Activated CD4-positive, alpha-beta memory T cell treated with anti-CD3 and anti-CD28 coated beads, Interleukin-2, amount 10 ng/mL, durations not matched to agents 7 days and 5 days (primary cell): ENCODE measurements at regions of chr6 and their contacts with region 1.

Region 1: DNA sequence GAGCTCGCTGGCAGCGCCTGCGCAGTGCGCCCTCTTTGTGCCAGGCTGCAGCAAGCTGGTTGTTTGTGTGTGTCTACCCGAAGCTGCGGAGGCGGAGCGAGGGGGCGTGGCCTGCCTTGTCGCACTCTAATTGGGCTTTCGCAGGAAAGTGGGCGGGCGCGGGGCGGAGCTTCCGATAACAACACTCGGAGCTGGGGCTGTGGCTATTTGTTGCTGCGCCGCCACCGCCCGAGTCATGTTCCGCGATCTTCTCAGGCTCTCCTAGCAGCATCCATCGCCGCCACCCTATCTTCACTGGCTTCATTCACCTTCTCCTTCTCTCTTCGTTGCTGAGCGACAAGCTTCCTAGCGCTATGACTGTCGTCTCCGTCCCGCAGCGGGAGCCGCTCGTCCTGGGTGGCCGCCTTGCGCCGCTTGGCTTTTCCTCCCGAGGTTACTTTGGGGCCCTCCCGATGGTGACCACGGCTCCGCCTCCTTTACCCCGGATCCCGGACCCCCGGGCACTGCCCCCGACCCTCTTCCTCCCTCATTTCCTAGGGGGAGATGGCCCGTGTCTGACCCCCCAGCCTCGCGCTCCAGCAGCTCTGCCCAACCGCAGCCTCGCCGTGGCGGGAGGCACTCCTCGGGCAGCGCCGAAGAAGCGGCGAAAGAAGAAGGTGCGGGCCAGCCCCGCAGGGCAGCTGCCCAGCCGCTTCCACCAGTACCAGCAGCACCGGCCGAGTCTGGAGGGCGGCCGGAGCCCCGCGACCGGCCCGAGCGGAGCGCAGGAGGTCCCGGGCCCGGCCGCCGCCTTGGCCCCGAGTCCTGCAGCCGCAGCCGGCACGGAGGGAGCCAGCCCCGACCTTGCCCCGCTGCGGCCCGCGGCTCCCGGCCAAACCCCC is at the start of gene PNRC1:
- DNase-seq: peak; percentile 100
- H3K4me3 Mint-ChIP-seq: peak within 1 kb of the TSS; percentile 82
- H3K27ac Mint-ChIP-seq: peak within 1 kb of the TSS; percentile 99
- H3K4me1 Mint-ChIP-seq: peaks cover 34% of the 10 kb centered on the region
- H3K27me3 Mint-ChIP-seq: no peaks in the 10 kb centered on the region
- total RNA-seq, gene PNRC1: 130 to 131 TPM

Region 2: GRCh38 chr6:88982720-88983119 is 98.1 kb before region 1 on chr6:
- CTCF ChIA-PET with region 1: interaction called, 21 read pairs
- POLR2A ChIA-PET with region 1: interaction called, 21 read pairs
- DNase-seq: peak; percentile 20
- H3K4me3 Mint-ChIP-seq: no peak overlapping the region
- H3K27ac Mint-ChIP-seq: no peak overlapping the region
- H3K4me1 Mint-ChIP-seq: no peaks in the 10 kb centered on the region
- H3K27me3 Mint-ChIP-seq: peaks cover 4% of the 10 kb centered on the region

Region 3: GRCh38 chr6:89098461-89098860 is 17.7 kb after region 1 on chr6:
- CTCF ChIA-PET with region 1: interaction called, 3 read pairs
- POLR2A ChIA-PET with region 1: interaction called, 17 read pairs
- DNase-seq: no peak
- H3K4me3 Mint-ChIP-seq: no peak overlapping the region
- H3K27ac Mint-ChIP-seq: no peak overlapping the region
- H3K4me1 Mint-ChIP-seq: peaks cover 8% of the 10 kb centered on the region
- H3K27me3 Mint-ChIP-seq: no peaks in the 10 kb centered on the region

Region 4: GRCh38 chr6:89145787-89146646 is 65.2 kb after region 1 on chr6 and contains the start of gene PM20D2:
- CTCF ChIA-PET with region 1: interaction called, 32 read pairs
- POLR2A ChIA-PET with region 1: interaction called, 178 read pairs
- DNase-seq: peak; percentile 57
- H3K4me3 Mint-ChIP-seq: peak within 1 kb of the TSS; percentile 82
- H3K27ac Mint-ChIP-seq: peak within 1 kb of the TSS; percentile 73
- H3K4me1 Mint-ChIP-seq: peaks cover 34% of the 10 kb centered on the region
- H3K27me3 Mint-ChIP-seq: peaks cover 28% of the 10 kb centered on the region
- total RNA-seq, gene PM20D2: 5.0 to 5.5 TPM

Region 5: DNA sequence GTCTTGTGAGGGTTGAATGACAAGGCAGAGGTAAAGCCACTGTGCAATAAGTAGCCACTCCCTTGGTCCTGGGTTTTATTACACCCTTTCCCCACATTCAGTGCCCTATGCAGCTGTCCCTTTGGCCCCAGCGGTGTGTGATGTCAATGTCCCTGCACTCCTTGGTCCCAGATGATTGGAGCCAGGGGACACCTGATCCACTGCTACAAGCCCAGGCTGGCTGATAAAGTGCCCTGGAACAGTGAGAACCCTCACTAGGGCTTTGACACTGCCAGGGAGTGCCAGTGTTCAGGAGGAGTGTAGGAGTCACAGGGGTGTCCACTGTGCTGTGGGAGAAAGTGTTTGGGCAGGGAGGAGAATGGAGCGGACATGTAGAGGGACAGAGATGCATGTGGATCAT is 106.0 kb after region 1 on chr6:
- CTCF ChIA-PET with region 1: no interaction called
- POLR2A ChIA-PET with region 1: no interaction called
- DNase-seq: no peak
- H3K4me3 Mint-ChIP-seq: no peak overlapping the region
- H3K27ac Mint-ChIP-seq: no peak overlapping the region
- H3K4me1 Mint-ChIP-seq: no peaks in the 10 kb centered on the region
- H3K27me3 Mint-ChIP-seq: peaks cover 10% of the 10 kb centered on the region

Region 6: DNA sequence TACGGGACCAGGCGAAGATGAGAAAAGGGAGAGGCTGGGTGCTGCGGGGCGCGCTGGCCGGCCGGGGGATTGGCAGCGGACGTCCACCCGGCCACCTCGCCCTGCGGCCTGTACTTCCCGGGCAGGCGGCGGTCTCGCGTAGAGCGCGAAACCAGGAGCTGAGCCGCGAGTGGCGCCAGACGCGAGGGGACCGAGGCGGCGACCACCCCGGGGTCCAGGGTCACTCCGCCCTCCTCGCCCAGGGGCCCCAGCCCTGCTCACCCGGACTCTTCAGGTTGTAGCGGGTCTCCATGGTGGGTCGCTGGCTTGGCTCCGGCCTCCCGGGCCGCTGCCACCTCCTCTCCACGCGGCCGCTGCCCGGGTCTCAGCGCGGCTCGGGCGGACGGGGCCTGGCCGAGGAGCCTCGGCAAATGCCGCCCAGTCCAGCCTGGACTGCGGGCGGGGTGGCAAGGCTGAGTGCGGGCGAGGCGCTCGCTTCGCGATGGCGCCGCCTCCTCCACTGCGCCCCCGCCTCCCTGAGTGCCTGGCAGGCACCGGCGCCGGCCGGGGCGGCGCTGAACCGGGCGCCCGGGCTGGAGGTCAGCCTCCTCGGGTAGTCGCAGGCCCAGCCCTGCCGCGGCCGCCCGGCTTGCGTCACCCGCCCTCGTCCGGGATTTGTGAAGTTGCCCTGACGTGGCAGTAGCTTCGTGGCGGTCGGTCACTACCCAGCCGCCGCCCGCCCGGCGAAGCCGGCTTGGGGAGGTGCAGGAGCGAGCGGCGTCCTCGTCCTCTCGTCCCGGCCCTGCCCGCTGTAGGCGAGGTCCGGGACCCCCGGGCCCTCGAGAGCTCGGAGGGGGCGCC is 271.7 kb after region 1 on chr6 and contains the start of gene UBE2J1:
- CTCF ChIA-PET with region 1: interaction called, 4 read pairs
- POLR2A ChIA-PET with region 1: interaction called, 131 read pairs
- DNase-seq: peak; percentile 82
- H3K4me3 Mint-ChIP-seq: peak within 1 kb of the TSS; percentile 90
- H3K27ac Mint-ChIP-seq: peak within 1 kb of the TSS; percentile 88
- H3K4me1 Mint-ChIP-seq: peaks cover 68% of the 10 kb centered on the region
- H3K27me3 Mint-ChIP-seq: no peaks in the 10 kb centered on the region
- total RNA-seq, gene UBE2J1: 36.9 to 37.2 TPM